ENCODE measurements at regions of chr13 and their contacts with region 1.

Region 1: GRCh38 chr13:30802953-30803478 is 67.7 kb downstream of the ALOX5AP start:
- DNase-seq: peak; percentile 93

Region 2: GRCh38 chr13:30132623-30133553 is 670.1 kb before region 1 on chr13:
- intact Hi-C with region 1: loop called (anchors 5 kb)
- DNase-seq: peak; percentile 97

Region 3: DNA sequence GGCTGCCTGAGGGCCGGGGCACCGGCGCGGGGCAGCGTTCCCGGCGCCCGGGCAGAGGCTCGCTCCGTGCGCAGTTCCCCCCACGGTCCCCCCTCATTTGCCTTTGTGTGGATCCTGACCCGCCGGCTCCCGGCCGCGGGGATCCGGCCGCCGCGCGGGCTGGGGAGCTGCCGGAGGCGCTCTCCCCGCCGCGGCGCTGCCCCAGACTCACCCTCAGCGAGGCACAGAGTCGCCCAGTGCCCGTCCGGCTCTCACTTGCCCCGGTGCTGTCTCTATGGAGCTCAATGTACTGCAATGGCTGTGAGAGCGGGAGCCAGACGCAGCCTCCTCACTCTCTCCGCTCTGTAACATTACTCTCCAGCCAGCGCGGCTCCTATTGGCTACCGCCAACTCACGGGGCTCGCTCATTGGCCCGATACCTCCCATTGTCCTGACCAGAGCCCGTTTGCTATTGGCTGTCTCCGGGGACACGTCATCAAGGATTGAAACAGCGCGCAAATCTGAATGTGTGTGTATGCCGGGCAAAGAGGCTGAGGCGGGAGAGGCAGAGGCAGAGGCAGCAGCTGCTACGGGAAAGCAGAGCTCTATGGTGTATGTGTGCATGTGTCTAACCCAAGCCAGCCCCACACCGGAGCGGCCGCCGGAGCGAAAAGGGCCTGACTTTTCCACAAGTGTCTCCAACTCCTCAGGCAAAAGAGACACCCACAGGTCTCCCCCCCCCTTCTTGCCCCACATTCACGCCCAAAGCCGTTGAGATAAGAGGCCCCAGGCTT is 337.2 kb before region 1 on chr13 and contains the start of gene HMGB1:
- intact Hi-C with region 1: loop called (anchors 2 kb)
- DNase-seq: peak; percentile 99
- total RNA-seq, gene HMGB1: 153 TPM

Region 4: DNA sequence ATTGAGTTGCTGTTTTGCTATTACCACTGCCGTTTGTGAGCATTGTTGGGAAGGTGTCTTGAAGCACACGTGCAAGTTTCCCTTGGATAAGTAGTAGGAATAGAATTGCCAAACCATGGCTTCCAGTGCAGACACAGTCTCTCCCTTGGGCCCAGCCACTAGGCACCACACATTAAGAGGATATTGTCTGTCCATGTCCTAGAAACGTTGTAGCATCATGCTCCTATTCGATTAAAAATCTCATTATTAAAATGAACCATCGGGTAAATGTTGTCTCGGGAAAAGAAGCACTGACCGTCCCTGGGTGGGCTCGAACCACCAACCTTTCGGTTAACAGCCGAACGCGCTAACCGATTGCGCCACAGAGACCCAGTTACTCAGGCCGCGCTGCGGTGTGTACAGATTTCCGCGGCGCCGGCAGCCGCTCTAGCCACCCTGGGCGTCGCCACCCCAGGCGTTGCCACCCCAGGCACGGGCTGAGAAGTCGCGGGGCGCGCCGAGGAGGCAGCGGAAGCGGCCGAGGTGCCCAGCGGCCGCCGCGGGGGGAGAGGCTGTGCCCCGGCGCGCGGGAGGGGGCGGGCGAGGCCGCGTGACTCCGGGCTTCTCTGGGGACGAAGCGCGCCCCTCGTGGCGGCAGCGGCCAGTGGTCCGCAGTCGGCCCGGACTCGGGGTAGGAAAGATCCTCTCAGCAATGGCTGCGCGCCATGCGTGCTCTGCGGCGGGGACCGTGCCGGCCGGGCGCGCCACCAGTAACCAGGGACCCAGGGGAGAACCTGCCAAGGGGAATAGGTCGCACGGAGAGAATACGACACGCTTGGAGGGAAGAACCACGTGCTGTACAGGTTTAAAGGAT is 129.1 kb before region 1 on chr13:
- intact Hi-C with region 1: loop called (anchors 5 kb)
- DNase-seq: peak; percentile 95

Region 5: GRCh38 chr13:30905932-30906383 is 102.9 kb after region 1 on chr13 and contains the start of gene MEDAG:
- intact Hi-C with region 1: loop called (anchors 5 kb)
- DNase-seq: peak; percentile 86
- total RNA-seq, gene MEDAG: 11.7 TPM

Measured in cardiac septum (tissue), 1 donor.